ENCODE measurements at regions of chr14 and their contacts with region 1.

Region 1: DNA sequence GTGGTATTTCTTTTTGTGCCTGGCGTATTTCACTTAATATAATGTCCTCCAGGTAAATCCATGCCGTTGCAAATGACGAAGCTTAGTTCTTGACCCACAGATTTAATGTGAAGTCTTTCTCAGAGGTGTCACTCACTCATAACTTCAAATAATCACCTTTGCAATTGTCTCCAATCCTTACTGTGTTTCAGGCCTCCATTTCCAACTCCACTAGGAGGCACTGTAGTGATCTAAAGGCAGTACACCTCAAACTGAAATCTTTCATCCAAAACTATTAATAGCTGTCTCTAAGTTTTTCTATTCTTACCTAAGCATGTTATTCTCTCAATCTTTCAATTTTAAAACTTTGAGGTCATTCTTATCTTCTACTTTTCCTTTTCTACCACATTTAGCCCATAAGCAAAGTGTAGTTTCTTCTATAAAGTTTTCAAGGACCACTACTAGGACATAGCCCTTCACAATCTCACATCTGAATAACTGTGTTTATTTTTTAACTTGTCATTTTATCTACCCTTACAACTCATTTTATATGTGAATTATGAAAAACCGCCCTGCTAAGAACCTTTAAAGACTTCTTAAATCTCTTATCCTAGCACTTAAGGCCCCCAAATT is 25.5 kb upstream of the FBXO34 start:
- DNase-seq: peak; percentile 21
- H3K4me3 ChIP-seq: no peak overlapping the region
- H3K27ac ChIP-seq: no peak overlapping the region
- H3K4me1 ChIP-seq: no peaks in the 10 kb centered on the region
- H3K27me3 ChIP-seq: peaks cover 2% of the 10 kb centered on the region
- CTCF ChIP-seq: peak; percentile 71 to 81

Region 2: GRCh38 chr14:55212634-55213033 is 33.1 kb before region 1 on chr14:
- CTCF ChIA-PET with region 1: no interaction called
- dilution Hi-C with region 1: no loop called
- in situ Hi-C with region 1: no loop called
- intact Hi-C with region 1: no loop called
- DNase-seq: peak; percentile 74
- H3K4me3 ChIP-seq: peak overlapping the region in 2 of 3 experiments; percentile 31 to 39
- H3K27ac ChIP-seq: peak overlapping the region; percentile 80
- H3K4me1 ChIP-seq: peaks cover 13% of the 10 kb centered on the region
- H3K27me3 ChIP-seq: no peaks in the 10 kb centered on the region
- CTCF ChIP-seq: no peak

Region 3: GRCh38 chr14:55354500-55354899 is 108.7 kb after region 1 on chr14:
- CTCF ChIA-PET with region 1: no interaction called
- dilution Hi-C with region 1: no loop called
- in situ Hi-C with region 1: no loop called
- intact Hi-C with region 1: loop called (anchors 1 kb)
- DNase-seq: peak; percentile 45
- H3K4me3 ChIP-seq: no peak overlapping the region
- H3K27ac ChIP-seq: no peak overlapping the region
- H3K4me1 ChIP-seq: peaks cover 8% of the 10 kb centered on the region
- H3K27me3 ChIP-seq: no peaks in the 10 kb centered on the region
- CTCF ChIP-seq: peak; percentile 55 to 76

Region 4: GRCh38 chr14:55366271-55366670 is 120.5 kb after region 1 on chr14:
- CTCF ChIA-PET with region 1: no interaction called
- dilution Hi-C with region 1: loop called (anchors 10 kb)
- in situ Hi-C with region 1: no loop called
- intact Hi-C with region 1: no loop called
- DNase-seq: peak; percentile 42
- H3K4me3 ChIP-seq: no peak overlapping the region
- H3K27ac ChIP-seq: no peak overlapping the region
- H3K4me1 ChIP-seq: no peaks in the 10 kb centered on the region
- H3K27me3 ChIP-seq: no peaks in the 10 kb centered on the region
- CTCF ChIP-seq: no peak

Measured in mammary epithelial cell (primary cell).